Mammary epithelial cell (primary cell): ENCODE measurements at regions of chr3 and their contacts with region 1.

Region 1: DNA sequence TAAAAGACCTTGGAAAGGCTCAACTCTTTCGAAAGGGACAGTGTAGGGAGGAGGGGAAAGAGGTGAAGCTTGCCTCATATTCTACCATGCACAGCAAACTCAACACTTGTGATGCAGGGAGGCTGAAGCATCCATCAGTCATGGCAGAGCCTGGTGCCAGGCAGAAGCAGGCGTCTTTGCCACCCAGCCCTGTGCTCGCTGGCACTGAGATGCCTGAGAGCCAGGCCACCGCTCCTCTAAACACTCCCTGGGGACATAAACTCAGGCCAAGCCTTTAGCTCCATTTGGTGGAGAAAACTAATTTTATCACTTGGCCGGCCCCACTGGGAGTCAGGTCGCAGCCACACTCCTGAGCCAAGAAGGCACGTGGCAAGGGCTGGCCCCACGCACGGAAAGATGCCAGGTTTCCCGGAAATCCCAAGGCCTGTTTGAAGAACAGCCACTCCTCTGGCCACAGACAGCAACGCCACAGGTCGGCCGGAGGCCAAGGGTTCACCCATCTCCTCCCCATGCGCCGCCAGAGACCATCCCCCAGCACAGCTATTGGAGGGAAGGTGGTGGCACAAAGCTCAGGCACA is 30.7 kb downstream of the XXYLT1 start:
- DNase-seq: no peak
- H3K4me3 ChIP-seq: no peak overlapping the region
- H3K27ac ChIP-seq: no peak overlapping the region
- H3K4me1 ChIP-seq: peaks cover 10% of the 10 kb centered on the region
- H3K27me3 ChIP-seq: no peaks in the 10 kb centered on the region
- CTCF ChIP-seq: no peak

Region 2: DNA sequence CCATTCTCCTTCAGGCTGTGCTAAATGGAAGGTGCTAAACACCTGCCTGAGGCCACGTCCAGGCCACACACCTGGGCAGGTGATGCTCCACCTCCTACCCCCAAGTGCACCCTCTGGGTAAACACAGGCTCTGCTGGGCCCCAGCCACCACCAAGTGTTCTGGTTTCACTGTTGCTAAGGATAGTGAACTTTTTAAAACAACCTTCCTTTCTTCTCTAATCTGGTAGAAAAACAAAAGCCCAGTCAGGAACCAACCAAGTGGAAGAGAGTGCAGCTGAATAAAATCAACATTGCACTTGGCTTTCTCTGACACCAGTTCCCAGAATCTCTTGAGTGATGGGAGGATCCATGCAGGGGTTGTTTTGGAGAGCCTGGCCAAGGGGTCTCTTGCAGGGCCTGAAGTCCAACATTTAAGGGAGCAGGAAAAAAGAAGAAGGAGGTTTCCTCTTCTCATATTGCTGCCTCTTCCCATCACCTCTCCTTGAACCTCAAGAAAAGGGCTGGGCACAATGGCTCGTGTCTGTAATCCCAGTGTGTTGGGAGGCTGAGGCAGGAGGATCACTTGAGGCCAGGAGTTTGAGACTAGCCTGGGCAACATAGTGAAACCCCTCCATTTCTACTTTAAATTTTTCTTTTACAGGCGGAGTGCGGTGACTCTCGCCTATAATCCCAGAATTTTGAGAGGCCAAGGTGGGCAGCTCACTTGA is 727.2 kb before region 1 on chr3:
- CTCF ChIA-PET with region 1: no interaction called
- dilution Hi-C with region 1: no loop called
- in situ Hi-C with region 1: no loop called
- intact Hi-C with region 1: no loop called
- DNase-seq: no peak
- H3K4me3 ChIP-seq: no peak overlapping the region
- H3K27ac ChIP-seq: no peak overlapping the region
- H3K4me1 ChIP-seq: peaks cover 5% of the 10 kb centered on the region
- H3K27me3 ChIP-seq: no peaks in the 10 kb centered on the region
- CTCF ChIP-seq: no peak

Region 3: DNA sequence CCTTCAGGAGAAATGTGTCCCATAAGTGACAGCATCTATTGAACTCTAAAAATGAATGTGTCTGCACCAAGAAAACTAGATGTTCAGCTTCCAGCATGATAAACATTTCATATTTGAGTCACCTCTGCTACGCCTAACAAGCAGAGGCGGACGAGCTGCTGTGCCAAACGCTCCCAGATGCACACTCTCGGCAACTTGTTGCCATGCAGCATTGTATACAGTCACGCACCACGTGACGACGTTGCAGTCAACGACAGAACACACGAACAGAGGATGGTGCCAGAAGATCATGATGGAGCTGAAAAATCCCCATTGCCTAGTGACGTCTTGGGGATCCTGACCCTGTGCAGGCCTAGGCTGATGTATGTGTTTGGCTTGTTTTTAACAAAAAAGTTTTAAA is 106.8 kb before region 1 on chr3:
- CTCF ChIA-PET with region 1: no interaction called
- dilution Hi-C with region 1: no loop called
- in situ Hi-C with region 1: no loop called
- intact Hi-C with region 1: no loop called
- DNase-seq: no peak
- H3K4me3 ChIP-seq: no peak overlapping the region
- H3K27ac ChIP-seq: no peak overlapping the region
- H3K4me1 ChIP-seq: peaks cover 24% of the 10 kb centered on the region
- H3K27me3 ChIP-seq: no peaks in the 10 kb centered on the region
- CTCF ChIP-seq: no peak

Region 4: GRCh38 chr3:195183071-195183776 is 57.0 kb before region 1 on chr3:
- CTCF ChIA-PET with region 1: no interaction called
- dilution Hi-C with region 1: no loop called
- in situ Hi-C with region 1: no loop called
- intact Hi-C with region 1: no loop called
- DNase-seq: no peak
- H3K4me3 ChIP-seq: no peak overlapping the region
- H3K27ac ChIP-seq: no peak overlapping the region
- H3K4me1 ChIP-seq: peaks cover 26% of the 10 kb centered on the region
- H3K27me3 ChIP-seq: no peaks in the 10 kb centered on the region
- CTCF ChIP-seq: no peak

Region 5: DNA sequence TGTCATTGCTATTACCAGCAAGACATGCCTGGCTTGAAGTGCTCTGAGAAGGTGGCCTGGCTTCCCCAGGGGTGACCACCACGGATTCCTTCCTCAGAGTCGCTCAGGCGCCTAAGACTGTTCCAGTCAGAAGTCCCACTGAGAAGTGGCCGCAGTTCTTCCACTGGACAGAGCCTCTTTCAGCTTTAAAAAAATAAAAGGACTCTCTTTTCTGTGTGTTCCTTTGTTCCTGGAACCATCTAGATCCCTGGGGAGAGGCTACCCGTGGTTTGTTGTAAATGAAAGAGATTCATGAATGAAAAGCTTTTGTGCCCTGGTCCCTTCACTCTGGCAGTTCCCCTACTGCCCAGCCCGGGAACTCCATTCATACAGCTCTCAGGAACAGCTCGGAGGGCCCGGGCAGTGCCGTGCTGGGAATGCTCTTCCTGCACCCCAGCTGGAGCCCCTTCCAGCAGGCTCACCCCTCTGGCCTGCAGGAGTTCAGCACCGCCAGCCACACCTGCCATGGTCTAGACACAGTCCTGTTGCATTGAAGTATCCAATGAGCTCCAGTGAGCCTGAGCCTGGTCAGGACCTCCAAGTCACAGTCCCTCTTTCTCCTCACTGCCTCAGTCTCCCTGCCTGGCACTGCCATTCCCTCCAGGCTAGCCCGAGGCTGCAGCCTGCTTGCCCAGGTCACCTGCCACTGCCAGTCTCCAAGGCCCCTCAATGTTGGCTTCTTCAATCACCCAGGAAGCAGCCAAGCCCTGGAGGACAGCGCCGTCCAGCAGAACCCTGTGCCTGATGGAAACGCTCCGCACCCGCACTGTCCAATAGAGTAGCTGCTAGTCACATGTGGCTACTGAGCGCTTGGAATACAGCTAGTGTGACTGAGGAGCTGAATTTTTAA is 44.7 kb before region 1 on chr3:
- CTCF ChIA-PET with region 1: no interaction called
- dilution Hi-C with region 1: no loop called
- in situ Hi-C with region 1: no loop called
- intact Hi-C with region 1: no loop called
- DNase-seq: no peak
- H3K4me3 ChIP-seq: no peak overlapping the region
- H3K27ac ChIP-seq: no peak overlapping the region
- H3K4me1 ChIP-seq: peaks cover 24% of the 10 kb centered on the region
- H3K27me3 ChIP-seq: no peaks in the 10 kb centered on the region
- CTCF ChIP-seq: no peak

Region 6: DNA sequence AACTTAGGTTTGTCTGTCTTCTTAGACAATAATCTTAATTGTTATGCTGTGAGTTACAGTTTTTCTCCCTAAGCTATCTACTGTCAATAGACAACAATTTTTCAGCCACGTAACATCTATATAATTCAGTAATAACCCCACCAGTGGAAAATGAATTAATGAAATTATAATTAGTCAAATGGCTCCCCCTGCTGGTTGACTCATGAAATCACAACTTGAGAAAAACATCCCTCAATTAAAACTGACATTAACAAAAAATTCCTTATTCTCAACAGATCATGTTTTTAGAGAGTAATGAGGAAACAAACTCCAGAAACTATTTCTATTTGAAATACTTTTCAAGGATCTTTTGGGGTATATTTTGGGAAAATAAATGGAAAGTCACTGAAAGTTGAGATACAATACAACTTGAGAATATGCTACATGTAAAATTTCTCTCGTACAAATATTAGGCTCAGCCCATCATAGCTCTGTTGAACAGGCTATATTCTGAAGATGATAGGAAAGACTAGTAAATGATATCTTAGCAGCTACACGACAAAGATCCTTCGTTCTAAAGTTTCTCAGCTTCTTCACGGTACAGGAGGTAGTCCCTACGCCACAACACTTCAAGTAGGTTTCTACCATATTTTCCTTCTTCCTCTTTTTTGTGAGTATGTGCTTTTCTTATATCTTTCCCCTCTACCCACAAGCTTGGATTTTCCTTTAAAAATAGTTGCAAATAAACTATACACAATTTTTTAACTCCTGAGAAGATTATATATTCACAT is 282.2 kb after region 1 on chr3:
- CTCF ChIA-PET with region 1: no interaction called
- dilution Hi-C with region 1: loop called (anchors 10 kb)
- in situ Hi-C with region 1: no loop called
- intact Hi-C with region 1: no loop called
- DNase-seq: no peak
- H3K4me3 ChIP-seq: no peak overlapping the region
- H3K27ac ChIP-seq: no peak overlapping the region
- H3K4me1 ChIP-seq: no peaks in the 10 kb centered on the region
- H3K27me3 ChIP-seq: no peaks in the 10 kb centered on the region
- CTCF ChIP-seq: peak; percentile 48 to 51